ENCODE measurements at regions of chr4 and their contacts with region 1.

Region 1: GRCh38 chr4:115851918-115852766 is 738.7 kb upstream of the NDST4 start:
- DNase-seq: peak; percentile 37
- CTCF ChIP-seq: peak; percentile 57

Region 2: DNA sequence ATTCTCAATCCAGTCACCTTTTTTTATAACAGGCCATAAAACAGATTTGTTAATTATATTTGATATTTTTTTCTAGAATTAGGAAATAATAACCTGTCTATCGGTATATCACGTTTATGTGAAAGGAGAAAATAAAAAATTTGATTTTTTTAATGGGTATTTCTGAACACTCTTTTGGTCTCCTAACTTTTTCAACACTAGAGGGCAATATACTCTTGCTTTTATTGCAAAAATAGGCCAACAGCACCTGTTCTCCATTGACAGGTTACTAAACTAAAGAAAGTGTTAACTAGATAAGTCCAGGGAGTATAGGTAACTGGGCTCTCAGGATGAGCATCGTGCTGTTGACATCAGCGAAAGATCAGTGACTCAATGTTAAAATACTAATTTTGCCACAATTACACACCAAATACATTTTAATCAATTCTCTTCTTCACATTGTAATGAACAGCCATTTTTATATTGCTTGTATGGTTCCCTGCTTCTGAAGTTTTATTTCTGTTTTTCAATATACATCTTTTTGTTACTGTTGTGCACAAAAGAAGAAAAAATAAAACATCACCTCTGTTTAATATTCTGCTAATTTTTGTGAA is 761.6 kb before region 1 on chr4:
- CTCF ChIA-PET with region 1: interaction called, 10 read pairs
- POLR2A ChIA-PET with region 1: no interaction called
- DNase-seq: peak; percentile 12
- CTCF ChIP-seq: peak; percentile 48

Region 3: GRCh38 chr4:115234405-115235093 is 617.6 kb before region 1 on chr4:
- CTCF ChIA-PET with region 1: interaction called, 26 read pairs
- POLR2A ChIA-PET with region 1: no interaction called
- DNase-seq: peak; percentile 12
- CTCF ChIP-seq: peak; percentile 33

Region 4: GRCh38 chr4:115865736-115866135 is 13.6 kb after region 1 on chr4:
- CTCF ChIA-PET with region 1: interaction called, 19 read pairs
- POLR2A ChIA-PET with region 1: no interaction called
- DNase-seq: no peak
- CTCF ChIP-seq: no peak

Measured in GM10248 (cell line).